GM12878 (cell line): ENCODE measurements at regions of chr17 and their contacts with region 1.

Region 1: GRCh38 chr17:29732613-29733012 is 109.9 kb upstream of the CORO6 start:
- DNase-seq: no peak
- ATAC-seq: no peak
- H3K4me3 ChIP-seq: no peak overlapping the region
- H3K27ac ChIP-seq: no peak overlapping the region; the same call in 1 of the 2 replicates
- H3K4me1 ChIP-seq: no peaks in the 10 kb centered on the region; the same call in 1 of the 2 replicates
- H3K27me3 ChIP-seq: no peaks in the 10 kb centered on the region
- CTCF ChIP-seq: no peak
- EP300 ChIP-seq: no peak
- POLR2A ChIP-seq: no peak
- RAD21 ChIP-seq: no peak

Region 2: DNA sequence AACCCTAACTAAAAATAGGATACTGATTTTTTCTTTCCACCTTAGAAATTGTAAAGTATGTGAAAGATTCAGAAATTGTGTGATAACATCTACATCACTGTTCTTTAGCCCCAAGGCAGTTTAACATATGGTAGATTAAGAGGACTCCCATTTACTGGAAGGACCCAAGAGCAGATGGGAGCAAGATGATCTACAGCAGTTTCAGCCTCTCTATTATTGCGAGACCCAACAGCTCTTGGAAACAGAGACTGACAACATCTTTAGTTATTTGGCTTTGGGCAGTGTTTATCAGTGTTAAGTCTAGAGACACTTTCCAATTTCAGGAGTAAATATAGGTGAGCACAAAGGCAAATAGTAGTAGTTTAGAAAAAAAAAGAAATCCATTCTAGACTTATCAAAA is 15.0 kb after region 1 on chr17:
- CTCF ChIA-PET with region 1: interaction called, 12 read pairs
- POLR2A ChIA-PET with region 1: interaction called, 6 read pairs
- RAD21 ChIA-PET with region 1: interaction called, 6 read pairs
- SMC1A ChIA-PET with region 1: interaction called, 297 read pairs
- in situ Hi-C with region 1: no loop called
- intact Hi-C with region 1: no loop called
- DNase-seq: no peak
- ATAC-seq: peak; percentile 36
- H3K4me3 ChIP-seq: no peak overlapping the region; the same call in 1 of the 2 replicates
- H3K27ac ChIP-seq: no peak overlapping the region
- H3K4me1 ChIP-seq: peaks cover 9% of the 10 kb centered on the region
- H3K27me3 ChIP-seq: no peaks in the 10 kb centered on the region
- CTCF ChIP-seq: no peak
- EP300 ChIP-seq: no peak
- POLR2A ChIP-seq: no peak
- RAD21 ChIP-seq: no peak

Region 3: DNA sequence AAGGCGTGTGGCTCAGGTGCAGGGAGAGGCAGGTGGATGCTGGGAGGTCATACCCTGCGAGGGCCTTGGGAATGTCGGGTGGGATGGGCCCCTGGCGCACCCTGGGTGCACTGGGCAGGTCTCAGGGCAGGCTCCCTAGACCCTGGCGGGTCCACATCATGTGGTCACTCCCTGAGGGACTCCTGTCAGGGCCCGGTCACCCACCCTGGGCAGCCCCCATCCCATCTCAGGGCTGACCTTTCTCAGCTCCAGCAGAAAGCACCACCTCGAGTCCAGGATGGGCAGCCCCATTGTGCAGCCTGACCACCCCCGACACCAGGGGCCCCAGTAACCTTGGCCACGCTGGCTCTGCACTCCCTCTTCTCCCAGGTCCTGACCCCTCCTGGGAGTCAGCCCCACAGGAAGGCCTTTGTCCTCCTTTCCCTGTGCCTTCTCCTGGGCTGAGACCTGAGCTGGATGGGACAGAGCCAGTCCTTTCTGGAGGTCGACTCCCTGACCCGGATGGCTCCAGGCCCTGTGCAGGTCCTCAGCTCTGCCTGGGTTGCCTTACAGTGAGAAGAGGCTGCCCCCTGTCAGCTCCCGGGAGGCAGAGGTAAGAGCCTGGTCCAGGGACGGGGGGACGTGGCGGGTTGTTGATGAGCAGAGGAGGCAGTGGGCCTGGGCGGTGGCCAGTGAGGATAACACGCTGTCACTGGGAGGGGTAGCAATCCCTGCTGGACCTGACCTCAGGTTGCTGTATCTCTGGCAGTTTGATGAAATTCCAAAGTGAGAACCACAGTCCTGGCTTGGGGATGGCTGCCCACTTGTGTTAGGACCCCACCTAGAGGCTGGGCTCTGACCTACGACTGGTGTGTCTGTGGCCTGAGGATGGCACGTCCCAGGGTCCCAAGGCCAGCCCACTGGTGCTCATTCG is 822.5 kb after region 1 on chr17:
- CTCF ChIA-PET with region 1: no interaction called
- POLR2A ChIA-PET with region 1: no interaction called
- RAD21 ChIA-PET with region 1: no interaction called
- SMC1A ChIA-PET with region 1: no interaction called
- in situ Hi-C with region 1: no loop called
- intact Hi-C with region 1: no loop called
- DNase-seq: no peak
- ATAC-seq: peak; percentile 27; the same call in 1 of the 3 replicates
- H3K4me3 ChIP-seq: no peak overlapping the region
- H3K27ac ChIP-seq: no peak overlapping the region
- H3K4me1 ChIP-seq: peaks cover 10% of the 10 kb centered on the region
- H3K27me3 ChIP-seq: no peaks in the 10 kb centered on the region; a peak in 1 of 4 replicates
- CTCF ChIP-seq: peak; percentile 15 to 30 (median 19); a peak in 3 of 6 replicates
- EP300 ChIP-seq: no peak
- POLR2A ChIP-seq: no peak
- RAD21 ChIP-seq: no peak